ENCODE measurements at regions of chr22 and their contacts with region 1.

Region 1: DNA sequence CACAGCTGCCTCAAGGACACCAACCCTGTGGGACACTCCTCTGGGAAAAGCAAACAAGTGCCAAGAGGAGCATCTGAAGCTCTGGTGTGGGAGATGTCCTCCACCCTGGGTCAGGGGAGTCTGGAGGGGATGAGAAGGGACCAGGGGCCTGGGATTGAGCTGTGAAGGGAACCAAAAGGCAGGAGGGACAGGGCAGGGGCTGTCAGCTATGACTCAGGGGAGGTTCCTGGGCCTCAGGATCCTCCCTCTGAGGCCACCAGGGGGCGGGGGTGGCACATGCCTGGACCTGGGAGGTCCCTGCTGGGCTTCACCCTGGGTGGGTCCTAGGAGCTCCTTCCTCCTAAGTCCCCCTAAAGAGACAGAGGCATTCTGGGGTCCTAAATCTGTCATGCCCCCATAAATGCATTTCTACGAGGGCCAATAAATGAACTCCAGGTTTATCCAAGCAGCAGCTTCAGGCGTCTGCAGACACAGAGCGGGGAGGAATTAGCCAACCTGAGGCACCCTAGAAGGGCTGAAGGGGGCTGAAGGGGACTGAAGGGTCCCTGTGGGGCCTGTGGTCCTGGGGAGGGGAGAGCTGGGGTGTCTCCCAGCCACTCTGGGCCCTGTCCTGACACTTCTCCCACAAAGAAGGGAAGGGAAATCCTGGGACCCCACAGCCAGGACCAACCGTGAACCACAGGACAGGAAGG is 31.9 kb upstream of the IGLL5 start:
- DNase-seq: peak; percentile 65
- CTCF ChIP-seq: peak; percentile 79

Region 2: GRCh38 chr22:22870577-22871404 is 15.0 kb after region 1 on chr22:
- CTCF ChIA-PET with region 1: interaction called, 26 read pairs
- POLR2A ChIA-PET with region 1: no interaction called
- DNase-seq: no peak
- CTCF ChIP-seq: peak; percentile 38

Region 3: GRCh38 chr22:22935546-22936157 is 79.9 kb after region 1 on chr22:
- CTCF ChIA-PET with region 1: interaction called, 16 read pairs
- POLR2A ChIA-PET with region 1: interaction called, 3 read pairs
- DNase-seq: peak; percentile 95
- CTCF ChIP-seq: peak; percentile 49

Region 4: GRCh38 chr22:22942511-22943329 is 87.0 kb after region 1 on chr22:
- CTCF ChIA-PET with region 1: interaction called, 16 read pairs
- POLR2A ChIA-PET with region 1: no interaction called
- DNase-seq: peak; percentile 69
- CTCF ChIP-seq: peak; percentile 69

Region 5: DNA sequence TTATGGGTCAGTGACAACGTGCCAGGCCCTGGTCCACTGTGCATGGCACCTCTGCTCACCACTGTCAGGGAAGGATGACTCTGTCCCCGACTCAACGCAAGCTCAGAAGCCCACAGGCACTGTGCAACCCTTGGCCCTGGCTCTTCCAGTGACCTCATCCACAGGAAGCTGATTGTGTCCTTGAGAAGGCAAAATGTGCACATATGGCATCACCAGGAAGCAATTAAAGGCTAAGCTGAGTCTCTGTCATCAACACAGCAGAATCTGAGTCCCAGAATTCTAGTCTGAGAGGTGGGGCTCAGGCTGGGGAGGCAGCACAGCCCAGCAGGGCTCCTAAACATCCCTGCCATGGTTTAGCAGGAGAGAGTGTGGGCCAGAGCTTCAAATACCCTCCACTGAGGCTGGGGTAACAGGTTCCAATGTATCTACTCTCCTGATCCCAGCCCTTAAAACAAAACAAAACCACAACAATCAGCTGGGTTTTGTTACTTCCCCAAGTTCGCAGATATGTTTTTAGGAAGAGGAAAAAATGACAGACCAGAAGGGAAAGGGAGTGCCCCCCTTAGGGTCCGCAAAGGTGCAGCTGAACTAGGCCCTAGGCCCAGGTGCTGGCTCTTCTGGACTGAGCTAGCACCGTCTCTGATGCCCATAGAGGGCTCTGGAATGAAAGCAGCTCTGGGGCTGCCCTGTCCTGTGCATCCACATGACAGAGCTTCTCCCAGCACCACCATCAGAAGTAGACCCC is 181.1 kb after region 1 on chr22:
- CTCF ChIA-PET with region 1: no interaction called
- POLR2A ChIA-PET with region 1: no interaction called
- DNase-seq: no peak
- CTCF ChIP-seq: no peak

Measured in GM10248 (cell line).